ENCODE measurements at regions of chr14 and their contacts with region 1.

Region 1: GRCh38 chr14:21092273-21093011 is 6.0 kb downstream of the ZNF219 start:
- DNase-seq: peak; percentile 94
- ATAC-seq: peak; percentile 97
- H3K4me3 Mint-ChIP-seq: no peak overlapping the region
- H3K27ac Mint-ChIP-seq: no peak overlapping the region
- H3K4me1 Mint-ChIP-seq: peaks cover 15% of the 10 kb centered on the region
- H3K27me3 Mint-ChIP-seq: no peaks in the 10 kb centered on the region
- CTCF ChIP-seq: peak; percentile 100

Region 2: DNA sequence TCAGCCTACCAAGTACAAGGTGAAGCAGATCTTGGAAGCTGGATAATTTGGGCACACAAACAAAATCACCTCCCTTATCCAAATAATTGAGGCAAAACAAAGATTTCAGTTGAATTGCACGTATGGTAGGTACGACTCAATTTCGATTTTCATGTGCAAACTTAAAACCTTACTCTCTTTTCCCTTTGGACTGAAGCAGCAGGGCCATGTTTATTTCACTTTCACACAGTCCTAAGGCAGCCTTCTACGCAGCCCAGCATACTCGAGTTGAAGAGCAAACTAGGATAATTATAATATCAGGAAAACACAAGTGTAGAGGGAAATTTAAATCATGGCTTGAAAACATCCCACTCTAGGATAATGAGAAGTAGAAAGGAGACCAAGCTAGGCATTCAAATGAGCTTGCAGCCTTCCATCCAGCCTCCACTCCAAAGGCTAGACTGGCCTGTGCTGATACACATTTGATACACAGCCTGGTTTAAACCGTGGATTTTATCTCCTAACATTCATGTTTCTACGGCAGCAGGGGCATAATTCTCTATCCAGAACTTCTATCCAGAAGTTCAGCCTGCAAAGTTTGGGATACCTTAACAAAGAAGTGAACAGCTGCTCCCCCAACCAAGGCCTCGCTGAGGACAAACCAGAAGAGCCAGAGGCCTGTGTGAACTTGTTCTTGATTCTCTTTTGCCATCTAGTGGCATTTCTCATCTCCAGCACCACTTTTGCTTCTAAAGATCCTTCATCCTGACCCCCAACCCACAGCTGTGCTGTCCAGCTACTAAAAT is 52.7 kb before region 1 on chr14:
- CTCF ChIA-PET with region 1: interaction called, 13 read pairs
- POLR2A ChIA-PET with region 1: no interaction called
- intact Hi-C with region 1: no loop called
- DNase-seq: peak; percentile 26
- ATAC-seq: peak; percentile 86
- H3K4me3 Mint-ChIP-seq: no peak overlapping the region
- H3K27ac Mint-ChIP-seq: no peak overlapping the region
- H3K4me1 Mint-ChIP-seq: peaks cover 4% of the 10 kb centered on the region
- H3K27me3 Mint-ChIP-seq: peaks cover 3% of the 10 kb centered on the region
- CTCF ChIP-seq: peak; percentile 50

Region 3: GRCh38 chr14:21057803-21058675 is 34.4 kb before region 1 on chr14 and contains the start of gene RNASE8:
- CTCF ChIA-PET with region 1: interaction called, 12 read pairs
- POLR2A ChIA-PET with region 1: no interaction called
- intact Hi-C with region 1: no loop called
- DNase-seq: no peak
- ATAC-seq: peak; percentile 42
- H3K4me3 Mint-ChIP-seq: no peak within 1 kb of the TSS
- H3K27ac Mint-ChIP-seq: no peak within 1 kb of the TSS
- H3K4me1 Mint-ChIP-seq: no peaks in the 10 kb centered on the region
- H3K27me3 Mint-ChIP-seq: peaks cover 15% of the 10 kb centered on the region
- CTCF ChIP-seq: no peak
- total RNA-seq, gene RNASE8: not detected

Region 4: GRCh38 chr14:21078287-21078686 is 14.2 kb before region 1 on chr14:
- CTCF ChIA-PET with region 1: interaction called, 70 read pairs
- POLR2A ChIA-PET with region 1: interaction called, 3 read pairs
- intact Hi-C with region 1: no loop called
- DNase-seq: no peak
- ATAC-seq: no peak
- H3K4me3 Mint-ChIP-seq: no peak overlapping the region
- H3K27ac Mint-ChIP-seq: no peak overlapping the region
- H3K4me1 Mint-ChIP-seq: no peaks in the 10 kb centered on the region
- H3K27me3 Mint-ChIP-seq: peaks cover 5% of the 10 kb centered on the region
- CTCF ChIP-seq: no peak

Region 5: GRCh38 chr14:21185491-21185890 is 93.0 kb after region 1 on chr14:
- CTCF ChIA-PET with region 1: no interaction called
- POLR2A ChIA-PET with region 1: no interaction called
- intact Hi-C with region 1: no loop called
- DNase-seq: no peak
- ATAC-seq: no peak
- H3K4me3 Mint-ChIP-seq: no peak overlapping the region
- H3K27ac Mint-ChIP-seq: no peak overlapping the region
- H3K4me1 Mint-ChIP-seq: no peaks in the 10 kb centered on the region
- H3K27me3 Mint-ChIP-seq: peaks cover 5% of the 10 kb centered on the region
- CTCF ChIP-seq: no peak